ENCODE measurements at regions of chr19 and their contacts with region 1.

Region 1: DNA sequence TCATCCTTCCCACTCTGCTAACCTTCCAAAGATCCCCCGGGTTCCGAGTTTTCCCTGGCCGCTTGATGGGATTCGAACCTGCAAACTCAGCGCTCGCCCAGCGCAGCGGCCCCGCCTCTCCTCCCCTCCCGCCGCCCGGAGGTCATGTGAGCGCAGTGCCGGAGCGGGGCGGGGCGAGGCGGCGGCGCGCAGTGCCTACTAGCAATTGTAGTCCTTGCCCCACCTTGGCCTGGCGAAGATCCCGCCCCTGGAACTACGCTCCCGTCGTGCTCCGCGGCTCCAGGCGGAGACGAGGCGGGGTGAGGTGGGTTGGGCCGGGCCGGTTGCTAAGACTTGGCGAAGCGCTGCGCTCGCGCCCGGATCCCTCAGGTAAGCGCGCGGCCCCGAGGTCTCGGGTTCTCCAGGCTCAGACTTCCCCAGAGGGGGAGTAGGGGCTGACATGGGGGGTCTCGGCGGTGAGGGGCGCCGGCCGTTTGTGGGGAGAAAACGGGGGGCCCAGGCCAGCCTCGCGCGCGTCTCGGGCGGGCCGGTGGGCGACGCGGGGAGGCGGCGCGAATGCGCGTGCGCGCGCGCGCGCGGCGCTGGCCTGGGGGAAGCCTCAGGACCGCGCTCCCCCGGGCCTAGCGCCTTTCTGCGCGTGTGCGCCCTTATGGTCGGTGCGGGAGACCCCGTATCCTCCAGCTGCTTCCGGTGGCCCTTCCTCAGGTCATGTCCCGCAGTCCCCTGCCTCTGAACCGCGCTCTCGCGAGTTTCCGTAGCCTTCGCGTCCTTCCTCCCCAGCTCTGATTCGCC is at the starts of genes ADAT3 and SCAMP4:
- DNase-seq: peak; percentile 99
- H3K4me3 Mint-ChIP-seq: peak within 1 kb of the TSS; percentile 89
- H3K27ac Mint-ChIP-seq: peak within 1 kb of the TSS; percentile 89
- H3K4me1 Mint-ChIP-seq: peaks cover 46% of the 10 kb centered on the region
- H3K27me3 Mint-ChIP-seq: no peaks in the 10 kb centered on the region
- total RNA-seq, gene ADAT3: 3.0 to 3.4 TPM
- total RNA-seq, gene SCAMP4: 12.1 to 14.5 TPM

Region 2: GRCh38 chr19:1855040-1855827 is 50.0 kb before region 1 on chr19:
- CTCF ChIA-PET with region 1: no interaction called
- intact Hi-C with region 1: loop called (anchors 2 kb)
- DNase-seq: peak; percentile 94
- H3K4me3 Mint-ChIP-seq: peak overlapping the region; percentile 70
- H3K27ac Mint-ChIP-seq: peak overlapping the region; percentile 87
- H3K4me1 Mint-ChIP-seq: peaks cover 62% of the 10 kb centered on the region
- H3K27me3 Mint-ChIP-seq: no peaks in the 10 kb centered on the region

Region 3: DNA sequence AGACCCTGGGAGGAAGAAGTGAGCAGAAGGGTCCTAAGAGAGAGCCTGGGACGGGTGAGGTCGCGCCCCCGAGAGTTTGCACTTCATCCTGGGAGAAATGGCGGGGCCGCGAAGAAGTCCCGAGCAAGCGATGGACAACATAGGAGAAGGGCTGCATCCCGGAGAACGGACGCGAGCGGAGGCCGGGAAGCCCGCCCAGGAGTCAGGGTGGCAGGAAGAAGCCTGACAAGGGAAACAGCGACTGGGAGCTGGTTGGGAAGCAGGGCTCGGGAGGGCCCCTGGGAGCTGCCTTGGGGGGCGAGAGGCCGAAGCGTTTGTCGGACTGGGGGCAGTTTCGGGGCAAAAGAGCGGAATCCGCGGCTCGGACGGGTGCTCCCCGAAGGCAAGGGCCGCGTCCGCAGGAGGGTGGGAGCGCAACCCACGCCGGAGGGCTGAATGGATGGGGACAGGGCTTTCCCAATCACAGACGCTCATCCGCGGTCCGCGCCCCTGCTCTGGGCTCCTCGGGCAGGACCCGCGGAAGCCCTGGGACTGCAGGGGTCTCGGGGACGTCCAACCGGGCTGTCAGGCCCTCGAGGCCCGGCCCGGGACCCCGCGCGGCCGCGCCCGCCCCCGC is 20.4 kb before region 1 on chr19:
- CTCF ChIA-PET with region 1: interaction called, 4 read pairs
- intact Hi-C with region 1: loop called (anchors 1 kb)
- DNase-seq: no peak
- H3K4me3 Mint-ChIP-seq: peak overlapping the region; percentile 96
- H3K27ac Mint-ChIP-seq: peak overlapping the region; percentile 95
- H3K4me1 Mint-ChIP-seq: peaks cover 27% of the 10 kb centered on the region
- H3K27me3 Mint-ChIP-seq: no peaks in the 10 kb centered on the region

Region 4: GRCh38 chr19:1942078-1942933 is 37.0 kb after region 1 on chr19:
- CTCF ChIA-PET with region 1: no interaction called
- intact Hi-C with region 1: loop called (anchors 1 kb)
- DNase-seq: peak; percentile 89
- H3K4me3 Mint-ChIP-seq: peak overlapping the region; percentile 91
- H3K27ac Mint-ChIP-seq: peak overlapping the region; percentile 92
- H3K4me1 Mint-ChIP-seq: peaks cover 31% of the 10 kb centered on the region
- H3K27me3 Mint-ChIP-seq: no peaks in the 10 kb centered on the region

Region 5: DNA sequence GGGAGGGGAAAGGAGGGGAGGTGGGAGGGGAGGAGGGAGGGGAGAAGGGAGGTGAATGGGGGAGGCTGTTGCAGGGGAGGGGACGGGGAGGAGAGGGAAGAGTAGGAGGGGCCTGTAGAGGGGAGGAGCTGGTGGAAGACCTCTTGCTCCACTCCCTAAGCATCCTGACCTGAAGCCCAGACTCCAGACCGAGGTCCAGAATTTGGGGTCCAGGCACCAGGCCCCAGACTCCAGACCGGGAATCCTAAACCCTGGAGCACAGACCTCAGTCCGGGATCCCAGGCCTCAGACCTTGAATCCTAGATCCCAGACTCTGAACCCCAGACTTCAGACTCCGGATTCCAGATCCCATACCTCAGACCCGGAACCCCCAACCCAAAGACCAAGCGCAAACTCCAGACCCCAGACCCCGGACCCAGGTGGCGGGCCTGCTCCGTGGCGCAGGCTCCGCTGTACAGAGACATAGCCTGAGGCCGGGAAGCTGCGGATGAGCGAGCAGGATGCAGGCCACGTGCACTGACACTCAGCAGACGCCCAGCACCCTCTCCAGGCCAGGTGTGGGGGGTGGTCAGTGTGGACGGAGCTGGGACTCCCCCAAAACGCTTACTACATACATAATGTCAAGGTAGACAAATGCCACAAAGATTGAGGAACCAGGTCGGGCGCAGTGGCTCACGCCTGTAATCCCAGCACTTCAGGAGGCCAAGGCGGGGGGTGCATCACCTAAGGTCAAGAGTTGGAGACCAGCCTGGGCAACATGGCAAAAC is 111.0 kb after region 1 on chr19:
- CTCF ChIA-PET with region 1: interaction called, 4 read pairs
- intact Hi-C with region 1: loop called (anchors 5 kb)
- DNase-seq: peak; percentile 77
- H3K4me3 Mint-ChIP-seq: peak overlapping the region; percentile 59
- H3K27ac Mint-ChIP-seq: peak overlapping the region; percentile 47
- H3K4me1 Mint-ChIP-seq: peaks cover 17% of the 10 kb centered on the region
- H3K27me3 Mint-ChIP-seq: no peaks in the 10 kb centered on the region

Region 6: DNA sequence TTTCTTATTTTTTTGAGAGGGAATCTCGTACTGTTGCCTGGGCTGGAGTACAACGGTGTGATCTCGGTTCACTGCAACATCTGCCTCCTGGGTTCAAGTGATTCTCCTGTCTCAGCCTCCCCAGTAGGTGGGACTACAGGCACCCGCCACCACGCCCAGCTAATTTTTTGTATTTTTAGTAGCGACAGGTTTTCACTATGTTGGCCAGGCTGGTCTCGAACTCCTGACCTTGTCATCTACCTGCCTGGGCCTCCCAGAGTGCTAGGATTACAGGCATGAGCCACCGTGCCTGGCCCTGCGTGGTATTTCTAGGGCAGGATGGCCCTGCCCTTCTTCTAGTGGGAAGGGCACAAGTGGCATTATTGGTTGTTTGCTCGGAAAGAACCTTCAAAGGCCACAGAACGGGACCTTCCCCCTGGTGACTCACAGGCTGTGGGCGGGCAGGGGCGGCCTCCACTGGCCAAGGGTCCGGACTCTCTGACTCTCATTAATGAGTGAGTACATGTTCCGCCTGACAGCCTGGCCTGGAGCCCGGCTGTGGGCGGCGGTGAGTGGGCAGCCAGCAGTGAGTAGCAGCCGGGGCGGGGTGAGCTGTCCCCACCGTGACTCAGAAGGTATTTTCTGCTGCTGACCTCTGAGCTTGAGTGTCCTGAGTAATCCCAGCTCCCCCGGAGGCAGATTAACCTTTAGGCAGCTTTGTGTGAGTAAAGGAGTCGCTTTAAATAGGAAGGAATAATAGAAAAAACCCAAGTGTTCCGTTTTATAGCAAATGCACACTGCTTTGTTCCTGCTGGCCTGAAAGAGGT is 263.6 kb after region 1 on chr19:
- CTCF ChIA-PET with region 1: no interaction called
- intact Hi-C with region 1: loop called (anchors 2 kb)
- DNase-seq: peak; percentile 71
- H3K4me3 Mint-ChIP-seq: peak overlapping the region; percentile 12
- H3K27ac Mint-ChIP-seq: peak overlapping the region; percentile 72
- H3K4me1 Mint-ChIP-seq: peaks cover 57% of the 10 kb centered on the region
- H3K27me3 Mint-ChIP-seq: no peaks in the 10 kb centered on the region